ENCODE measurements at regions of chr5 and their contacts with region 1.

Region 1: GRCh38 chr5:100479079-100479688 is 56.0 kb upstream of the FAM174A start:
- DNase-seq: peak; percentile 76
- H3K4me3 Mint-ChIP-seq: no peak overlapping the region
- H3K27ac Mint-ChIP-seq: no peak overlapping the region
- H3K4me1 Mint-ChIP-seq: no peaks in the 10 kb centered on the region
- H3K27me3 Mint-ChIP-seq: no peaks in the 10 kb centered on the region
- CTCF ChIP-seq: peak; percentile 74

Region 2: DNA sequence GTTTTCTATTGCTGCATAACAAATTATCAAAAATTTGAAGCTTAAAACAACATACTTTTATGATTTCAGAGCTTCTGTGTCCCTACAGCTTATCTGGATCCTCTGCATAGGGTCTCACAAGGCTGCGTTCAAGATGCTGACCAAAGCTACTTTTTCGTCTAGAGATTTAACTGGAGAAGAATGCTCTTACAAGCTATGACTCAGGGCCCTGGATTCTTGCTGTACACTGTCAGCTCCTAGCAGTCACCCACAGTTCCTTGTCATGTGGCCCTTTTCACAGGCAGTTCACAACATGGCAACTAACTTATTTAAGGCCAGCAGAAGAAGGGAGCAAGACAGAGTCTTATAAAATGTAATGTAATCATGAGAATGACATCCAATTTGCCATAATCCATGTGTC is 14.8 kb before region 1 on chr5:
- CTCF ChIA-PET with region 1: interaction called, 10 read pairs
- POLR2A ChIA-PET with region 1: no interaction called
- intact Hi-C with region 1: no loop called
- DNase-seq: peak; percentile 42
- H3K4me3 Mint-ChIP-seq: no peak overlapping the region
- H3K27ac Mint-ChIP-seq: no peak overlapping the region
- H3K4me1 Mint-ChIP-seq: peaks cover 6% of the 10 kb centered on the region
- H3K27me3 Mint-ChIP-seq: no peaks in the 10 kb centered on the region
- CTCF ChIP-seq: no peak

Region 3: DNA sequence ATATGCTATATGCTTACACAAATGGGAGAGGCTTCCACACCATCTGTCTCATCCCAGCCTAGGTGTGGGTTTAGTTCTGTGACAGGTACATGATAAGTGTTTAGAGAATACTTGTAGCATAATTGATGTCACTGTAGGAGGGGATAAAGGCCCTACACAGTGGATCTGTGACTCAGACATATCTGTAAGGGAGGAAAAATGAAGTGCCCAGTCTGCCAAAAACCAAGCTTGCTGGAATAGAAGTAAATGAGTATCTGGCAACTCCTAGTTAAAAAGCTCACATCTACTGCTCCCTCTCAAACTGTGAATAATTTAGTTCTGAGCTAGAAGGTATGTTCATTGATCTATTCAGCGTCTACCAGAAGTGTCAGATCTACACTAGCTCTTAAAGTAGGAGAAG is 17.1 kb after region 1 on chr5:
- CTCF ChIA-PET with region 1: interaction called, 12 read pairs
- POLR2A ChIA-PET with region 1: interaction called, 3 read pairs
- intact Hi-C with region 1: no loop called
- DNase-seq: no peak
- H3K4me3 Mint-ChIP-seq: no peak overlapping the region
- H3K27ac Mint-ChIP-seq: no peak overlapping the region
- H3K4me1 Mint-ChIP-seq: peaks cover 9% of the 10 kb centered on the region
- H3K27me3 Mint-ChIP-seq: no peaks in the 10 kb centered on the region
- CTCF ChIP-seq: no peak

Region 4: GRCh38 chr5:100584069-100584468 is 104.9 kb after region 1 on chr5:
- CTCF ChIA-PET with region 1: no interaction called
- POLR2A ChIA-PET with region 1: no interaction called
- intact Hi-C with region 1: no loop called
- DNase-seq: no peak
- H3K4me3 Mint-ChIP-seq: no peak overlapping the region
- H3K27ac Mint-ChIP-seq: no peak overlapping the region
- H3K4me1 Mint-ChIP-seq: no peaks in the 10 kb centered on the region
- H3K27me3 Mint-ChIP-seq: no peaks in the 10 kb centered on the region
- CTCF ChIP-seq: no peak

Region 5: DNA sequence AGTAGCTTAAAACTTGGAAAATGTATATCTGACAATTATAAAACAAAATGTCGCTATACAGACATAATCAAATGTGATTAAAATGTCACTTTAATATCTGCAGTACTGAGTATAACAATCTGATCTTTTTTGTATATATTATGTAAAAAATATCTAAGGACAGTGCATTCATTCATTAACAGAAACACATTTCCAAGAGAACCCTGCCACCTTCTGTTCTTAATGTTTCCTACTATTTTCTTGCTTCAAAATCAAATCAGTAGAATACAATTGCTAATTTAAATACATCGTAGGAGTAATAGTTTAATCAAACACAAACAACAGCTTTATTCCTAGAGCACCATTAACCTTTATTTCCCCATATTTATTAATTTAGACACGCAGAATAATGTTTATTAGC is 566.5 kb after region 1 on chr5:
- CTCF ChIA-PET with region 1: interaction called, 3 read pairs
- POLR2A ChIA-PET with region 1: no interaction called
- intact Hi-C with region 1: loop called (anchors 1 kb)
- DNase-seq: peak; percentile 9
- H3K4me3 Mint-ChIP-seq: no peak overlapping the region
- H3K27ac Mint-ChIP-seq: no peak overlapping the region
- H3K4me1 Mint-ChIP-seq: no peaks in the 10 kb centered on the region
- H3K27me3 Mint-ChIP-seq: no peaks in the 10 kb centered on the region
- CTCF ChIP-seq: peak; percentile 30

Region 6: GRCh38 chr5:101390151-101390908 is 911.1 kb after region 1 on chr5:
- CTCF ChIA-PET with region 1: interaction called, 7 read pairs
- POLR2A ChIA-PET with region 1: no interaction called
- intact Hi-C with region 1: loop called (anchors 1 kb)
- DNase-seq: peak; percentile 58
- H3K4me3 Mint-ChIP-seq: no peak overlapping the region
- H3K27ac Mint-ChIP-seq: no peak overlapping the region
- H3K4me1 Mint-ChIP-seq: no peaks in the 10 kb centered on the region
- H3K27me3 Mint-ChIP-seq: peaks cover 11% of the 10 kb centered on the region
- CTCF ChIP-seq: peak; percentile 60

Region 7: GRCh38 chr5:101473483-101473882 is 994.3 kb after region 1 on chr5:
- CTCF ChIA-PET with region 1: no interaction called
- POLR2A ChIA-PET with region 1: no interaction called
- intact Hi-C with region 1: no loop called
- DNase-seq: peak; percentile 25
- H3K4me3 Mint-ChIP-seq: no peak overlapping the region
- H3K27ac Mint-ChIP-seq: no peak overlapping the region
- H3K4me1 Mint-ChIP-seq: no peaks in the 10 kb centered on the region
- H3K27me3 Mint-ChIP-seq: no peaks in the 10 kb centered on the region
- CTCF ChIP-seq: no peak

Region 8: GRCh38 chr5:101991486-101991885 is 1512.3 kb after region 1 on chr5:
- CTCF ChIA-PET with region 1: no interaction called
- POLR2A ChIA-PET with region 1: no interaction called
- intact Hi-C with region 1: loop called (anchors 10 kb)
- DNase-seq: no peak
- H3K4me3 Mint-ChIP-seq: no peak overlapping the region
- H3K27ac Mint-ChIP-seq: no peak overlapping the region
- H3K4me1 Mint-ChIP-seq: no peaks in the 10 kb centered on the region
- H3K27me3 Mint-ChIP-seq: peaks cover 11% of the 10 kb centered on the region
- CTCF ChIP-seq: no peak